IMR-90 (cell line): ENCODE measurements at regions of chr13 and their contacts with region 1.

Region 1: DNA sequence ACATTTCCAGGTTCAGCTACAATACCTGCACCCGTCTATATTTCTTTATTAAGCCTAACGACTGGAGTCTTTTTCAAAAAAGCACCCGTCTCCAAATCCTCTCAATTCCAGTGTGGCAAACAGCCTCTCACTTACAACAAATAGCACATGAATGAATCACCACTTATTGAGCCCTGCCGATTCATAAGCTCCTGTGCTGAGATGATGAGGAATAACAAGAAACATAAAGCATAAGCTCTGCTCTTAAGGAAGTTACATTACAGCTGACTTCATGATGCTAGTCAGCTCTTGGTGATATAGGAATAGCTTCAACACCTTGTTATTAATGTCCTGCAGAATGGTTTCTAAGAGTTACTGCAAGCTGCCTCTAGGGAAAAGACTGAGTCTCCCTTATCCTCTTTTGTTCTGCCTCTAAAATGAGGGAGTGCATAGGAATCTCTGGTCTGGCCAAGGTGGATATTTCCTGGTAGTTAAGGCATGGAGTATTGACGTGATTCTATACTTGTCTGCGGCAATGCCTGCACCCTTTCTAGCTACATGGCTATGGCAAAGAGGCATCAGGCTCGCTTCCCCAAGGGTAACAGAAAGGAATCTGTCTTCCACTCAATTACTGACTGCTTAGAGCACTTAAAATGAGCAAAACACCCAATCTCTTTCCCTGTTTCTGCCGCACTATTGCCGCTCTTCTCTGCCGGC is 195.7 kb downstream of the KLF12 start:
- DNase-seq: peak; percentile 94
- ATAC-seq: peak; percentile 82
- H3K4me3 ChIP-seq: no peak overlapping the region
- H3K27ac ChIP-seq: peak overlapping the region; percentile 16; the same call in 1 of the 2 replicates
- H3K4me1 ChIP-seq: peaks cover 20% of the 10 kb centered on the region
- H3K27me3 ChIP-seq: no peaks in the 10 kb centered on the region
- CTCF ChIP-seq: no peak
- POLR2A ChIP-seq: no peak
- RAD21 ChIP-seq: peak; percentile 31; the same call in 1 of the 2 replicates

Region 2: GRCh38 chr13:73765651-73766384 is 172.7 kb before region 1 on chr13:
- CTCF ChIA-PET with region 1: no interaction called
- POLR2A ChIA-PET with region 1: no interaction called
- dilution Hi-C with region 1: no loop called
- in situ Hi-C with region 1: no loop called
- intact Hi-C with region 1: loop called (anchors 5 kb)
- DNase-seq: peak; percentile 58
- ATAC-seq: peak; percentile 68
- H3K4me3 ChIP-seq: no peak overlapping the region
- H3K27ac ChIP-seq: no peak overlapping the region
- H3K4me1 ChIP-seq: peaks cover 8% of the 10 kb centered on the region
- H3K27me3 ChIP-seq: no peaks in the 10 kb centered on the region
- CTCF ChIP-seq: no peak
- POLR2A ChIP-seq: no peak
- RAD21 ChIP-seq: no peak

Region 3: DNA sequence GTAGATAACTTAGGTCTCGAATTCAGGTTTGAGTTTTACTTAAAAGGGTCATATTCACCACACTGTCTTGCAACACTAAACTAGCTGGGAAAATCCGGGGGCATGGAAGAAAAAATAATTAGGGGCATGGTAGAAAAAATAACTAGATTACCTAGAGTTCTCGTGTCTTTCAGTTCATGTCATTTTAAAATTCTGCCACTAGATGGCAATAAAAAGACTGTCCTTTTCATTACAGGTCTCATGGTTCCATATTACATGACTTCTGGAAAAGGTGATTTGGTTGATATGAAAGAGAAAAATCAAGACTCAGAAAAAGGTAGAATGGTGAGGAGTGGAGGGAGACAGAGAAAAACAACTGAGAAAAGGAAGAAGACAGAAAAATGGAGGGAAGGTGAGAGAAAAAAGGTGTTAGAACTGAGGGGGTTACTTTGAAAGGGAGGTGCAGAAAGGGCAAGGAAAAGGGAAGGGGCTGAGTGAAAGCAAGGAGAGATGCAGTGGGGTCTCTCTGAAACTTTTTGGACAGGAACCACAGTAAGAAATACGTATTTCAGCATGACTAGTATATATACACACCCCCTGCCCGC is 103.3 kb before region 1 on chr13:
- CTCF ChIA-PET with region 1: no interaction called
- POLR2A ChIA-PET with region 1: no interaction called
- dilution Hi-C with region 1: no loop called
- in situ Hi-C with region 1: no loop called
- intact Hi-C with region 1: loop called (anchors 10 kb)
- DNase-seq: peak; percentile 56
- ATAC-seq: peak; percentile 79; the same call in 1 of the 2 replicates
- H3K4me3 ChIP-seq: no peak overlapping the region
- H3K27ac ChIP-seq: no peak overlapping the region
- H3K4me1 ChIP-seq: peaks cover 6% of the 10 kb centered on the region
- H3K27me3 ChIP-seq: no peaks in the 10 kb centered on the region
- CTCF ChIP-seq: peak; percentile 63
- POLR2A ChIP-seq: no peak
- RAD21 ChIP-seq: peak; percentile 70

Region 4: GRCh38 chr13:73851104-73851503 is 87.4 kb before region 1 on chr13:
- CTCF ChIA-PET with region 1: no interaction called
- POLR2A ChIA-PET with region 1: no interaction called
- dilution Hi-C with region 1: no loop called
- in situ Hi-C with region 1: no loop called
- intact Hi-C with region 1: loop called (anchors 5 kb)
- DNase-seq: peak; percentile 81
- ATAC-seq: peak; percentile 90
- H3K4me3 ChIP-seq: no peak overlapping the region
- H3K27ac ChIP-seq: no peak overlapping the region; the same call in 1 of the 2 replicates
- H3K4me1 ChIP-seq: peaks cover 3% of the 10 kb centered on the region
- H3K27me3 ChIP-seq: no peaks in the 10 kb centered on the region
- CTCF ChIP-seq: no peak
- POLR2A ChIP-seq: no peak
- RAD21 ChIP-seq: no peak